PC-9 (cell line): ENCODE measurements at regions of chr2 and their contacts with region 1.

Region 1: DNA sequence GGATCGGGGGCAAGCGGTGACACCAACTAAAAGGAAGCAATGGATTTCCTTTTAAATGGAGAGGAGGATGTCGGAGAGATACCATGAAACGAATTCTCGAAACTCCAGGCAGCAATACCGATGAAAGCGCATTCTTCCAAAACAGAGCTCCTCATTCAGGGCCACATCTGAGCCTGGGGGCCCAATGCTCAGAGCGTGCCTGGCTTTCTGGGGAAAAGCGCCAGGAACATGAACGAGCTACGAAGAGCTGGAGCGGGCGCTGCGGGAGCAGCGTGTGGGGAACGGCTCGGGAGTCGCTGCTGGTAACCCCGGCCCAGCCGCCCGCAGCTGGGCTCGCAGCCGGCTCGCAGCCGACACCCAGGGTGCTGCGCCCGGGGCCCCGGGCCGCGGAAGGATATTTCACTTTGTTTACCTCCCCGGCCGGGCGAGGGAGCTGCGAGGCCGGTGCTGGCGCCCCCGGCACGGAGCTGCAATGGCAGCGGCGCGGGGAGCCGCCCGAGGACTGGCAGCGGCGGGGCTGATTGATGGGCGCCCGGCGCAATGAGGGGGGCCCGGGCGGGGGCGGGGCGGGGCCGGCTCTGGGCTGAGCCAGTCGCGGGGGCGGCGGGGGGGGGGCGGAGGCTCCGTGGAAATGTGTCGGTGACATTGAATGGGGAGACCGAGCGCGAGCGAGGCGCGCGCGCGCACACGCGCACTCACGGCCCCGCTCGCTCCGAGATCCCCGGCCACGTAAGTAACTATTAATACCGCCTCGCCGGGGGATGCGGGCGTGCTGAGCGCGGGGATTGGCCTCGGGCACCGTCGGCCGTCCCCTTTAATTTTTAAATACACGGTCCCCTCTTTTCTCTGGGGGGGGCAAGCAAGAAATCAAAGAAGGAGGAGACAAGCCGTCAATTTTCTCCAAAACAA is at the start of gene TRIB2:
- DNase-seq: peak; percentile 66 to 77
- H3K4me3 ChIP-seq: peak within 1 kb of the TSS; percentile 96
- H3K27ac ChIP-seq: peak within 1 kb of the TSS; percentile 94
- H3K4me1 ChIP-seq: peaks cover 35% of the 10 kb centered on the region
- H3K27me3 ChIP-seq: no peaks in the 10 kb centered on the region
- CTCF ChIP-seq: peak; percentile 8; the same call in 1 of the 2 replicates
- total RNA-seq, gene TRIB2: 18.9 and 20.2 TPM in 2 replicates

Region 2: DNA sequence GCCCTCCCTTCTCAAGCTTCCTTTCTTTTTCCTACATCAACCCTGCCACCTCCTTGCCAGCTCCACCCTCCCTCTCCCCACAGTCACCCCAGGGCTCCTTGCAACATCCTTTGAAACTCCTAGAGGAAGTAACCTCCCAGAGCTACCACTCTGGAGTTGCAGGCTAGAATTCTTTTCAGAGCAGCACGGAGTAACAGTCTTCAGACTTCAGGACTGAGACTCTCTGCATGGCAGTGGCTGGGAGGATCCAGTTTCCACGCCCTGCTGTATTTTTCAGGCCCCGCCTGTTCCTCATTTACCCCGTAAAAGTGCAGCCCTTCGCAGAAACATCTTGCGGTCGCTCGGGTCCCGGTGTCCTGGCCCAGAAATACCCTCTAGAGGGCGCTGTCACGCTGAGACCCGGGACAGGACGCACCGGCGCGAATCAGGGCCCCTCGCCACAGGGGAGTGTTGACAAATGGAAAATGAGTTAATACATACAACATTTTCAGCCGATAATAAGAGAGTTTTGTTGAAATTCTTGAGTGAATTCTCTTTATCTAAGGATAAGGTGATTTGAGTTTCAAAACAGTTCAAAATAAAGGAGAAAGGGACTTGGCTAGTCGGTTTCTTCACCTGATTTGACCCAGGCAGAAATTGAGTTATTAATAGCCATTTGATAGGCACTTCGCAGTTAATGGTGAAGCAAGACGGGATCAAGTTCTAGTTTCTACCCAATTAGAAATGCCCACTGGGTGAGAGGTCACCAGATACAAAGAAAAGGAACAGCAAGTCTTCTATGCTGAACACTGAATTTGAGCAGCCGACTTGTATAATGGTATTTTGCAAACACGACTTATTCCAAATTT is 1028.1 kb before region 1 on chr2:
- CTCF ChIA-PET with region 1: no interaction called
- POLR2A ChIA-PET with region 1: no interaction called
- intact Hi-C with region 1: loop called (anchors 10 kb)
- DNase-seq: peak; percentile 78 to 90
- H3K4me3 ChIP-seq: peak overlapping the region; percentile 53
- H3K27ac ChIP-seq: peak overlapping the region; percentile 82
- H3K4me1 ChIP-seq: peaks cover 42% of the 10 kb centered on the region
- H3K27me3 ChIP-seq: no peaks in the 10 kb centered on the region
- CTCF ChIP-seq: peak; percentile 99

Region 3: DNA sequence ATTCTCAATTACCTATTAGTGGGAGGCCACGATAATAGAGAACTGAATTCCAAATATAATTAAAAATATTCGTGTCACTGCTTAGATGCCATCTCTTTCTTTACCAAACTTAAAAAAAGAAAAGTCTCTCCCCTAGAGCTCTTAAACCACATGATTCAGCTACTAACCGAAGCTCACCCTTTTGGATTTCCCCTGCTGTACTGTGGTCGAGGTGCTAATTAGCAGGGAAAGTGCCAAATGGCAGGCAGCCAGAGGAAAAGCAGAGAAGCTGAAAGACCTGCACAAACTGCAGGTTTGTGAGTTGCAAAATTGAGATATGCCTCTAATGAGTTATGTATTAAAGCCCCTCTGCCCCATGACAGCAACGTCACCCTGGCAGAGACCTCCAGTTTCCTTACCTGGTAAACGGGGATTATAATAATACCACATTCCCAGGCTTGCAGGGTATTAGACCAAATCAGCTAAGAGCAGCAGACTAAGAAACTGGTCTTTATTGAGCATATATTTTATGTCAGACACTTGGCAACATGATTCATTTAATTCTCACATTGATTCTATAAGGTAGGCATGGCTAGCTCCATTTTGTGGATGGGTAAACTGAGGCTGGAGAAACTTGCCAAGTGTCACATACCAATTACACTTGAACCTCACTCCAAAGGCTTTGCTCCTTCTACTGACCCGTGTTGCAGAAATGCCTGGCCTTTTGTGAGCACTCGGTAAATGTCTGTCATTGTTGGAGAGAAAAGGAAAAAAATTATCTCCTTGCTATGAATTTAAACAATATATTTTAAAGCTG is 710.5 kb before region 1 on chr2:
- CTCF ChIA-PET with region 1: no interaction called
- POLR2A ChIA-PET with region 1: no interaction called
- intact Hi-C with region 1: loop called (anchors 5 kb)
- DNase-seq: peak; percentile 55 to 60
- H3K4me3 ChIP-seq: no peak overlapping the region
- H3K27ac ChIP-seq: no peak overlapping the region
- H3K4me1 ChIP-seq: peaks cover 40% of the 10 kb centered on the region
- H3K27me3 ChIP-seq: no peaks in the 10 kb centered on the region
- CTCF ChIP-seq: no peak

Region 4: GRCh38 chr2:12176623-12177454 is 539.7 kb before region 1 on chr2:
- CTCF ChIA-PET with region 1: no interaction called
- POLR2A ChIA-PET with region 1: interaction called, 4 read pairs
- intact Hi-C with region 1: loop called (anchors 1 kb)
- DNase-seq: peak; percentile 78 to 95
- H3K4me3 ChIP-seq: no peak overlapping the region
- H3K27ac ChIP-seq: peak overlapping the region; percentile 50
- H3K4me1 ChIP-seq: peaks cover 30% of the 10 kb centered on the region
- H3K27me3 ChIP-seq: no peaks in the 10 kb centered on the region
- CTCF ChIP-seq: no peak

Region 5: GRCh38 chr2:12317814-12318426 is 398.6 kb before region 1 on chr2:
- CTCF ChIA-PET with region 1: interaction called, 4 read pairs
- POLR2A ChIA-PET with region 1: no interaction called
- intact Hi-C with region 1: loop called (anchors 2 kb)
- DNase-seq: peak; percentile 12 to 86
- H3K4me3 ChIP-seq: no peak overlapping the region; the same call in 1 of the 2 replicates
- H3K27ac ChIP-seq: peak overlapping the region; percentile 92
- H3K4me1 ChIP-seq: peaks cover 44% of the 10 kb centered on the region
- H3K27me3 ChIP-seq: no peaks in the 10 kb centered on the region
- CTCF ChIP-seq: no peak

Region 6: DNA sequence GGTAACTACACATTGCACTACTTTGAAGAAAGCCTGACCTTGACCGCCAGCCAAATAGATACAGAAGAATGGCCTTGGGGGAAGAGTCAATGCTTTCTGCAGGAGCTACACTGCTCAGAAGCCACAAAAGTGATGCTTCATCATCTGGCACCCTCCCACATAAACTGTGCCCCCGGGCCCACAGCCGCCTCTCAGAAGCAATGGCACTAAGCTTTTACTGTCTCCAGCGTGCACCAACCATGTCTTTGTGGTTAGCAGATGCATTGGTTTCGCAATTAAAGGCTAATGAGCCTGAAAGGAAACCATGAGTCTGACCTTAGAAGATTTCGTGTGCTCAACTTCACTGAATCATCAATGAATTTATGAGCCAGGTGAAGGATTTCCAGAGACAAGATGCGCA is 209.2 kb before region 1 on chr2:
- CTCF ChIA-PET with region 1: no interaction called
- POLR2A ChIA-PET with region 1: interaction called, 3 read pairs
- intact Hi-C with region 1: loop called (anchors 5 kb)
- DNase-seq: peak; percentile 78 to 98
- H3K4me3 ChIP-seq: no peak overlapping the region
- H3K27ac ChIP-seq: no peak overlapping the region
- H3K4me1 ChIP-seq: peaks cover 38% of the 10 kb centered on the region
- H3K27me3 ChIP-seq: no peaks in the 10 kb centered on the region
- CTCF ChIP-seq: no peak

Region 7: DNA sequence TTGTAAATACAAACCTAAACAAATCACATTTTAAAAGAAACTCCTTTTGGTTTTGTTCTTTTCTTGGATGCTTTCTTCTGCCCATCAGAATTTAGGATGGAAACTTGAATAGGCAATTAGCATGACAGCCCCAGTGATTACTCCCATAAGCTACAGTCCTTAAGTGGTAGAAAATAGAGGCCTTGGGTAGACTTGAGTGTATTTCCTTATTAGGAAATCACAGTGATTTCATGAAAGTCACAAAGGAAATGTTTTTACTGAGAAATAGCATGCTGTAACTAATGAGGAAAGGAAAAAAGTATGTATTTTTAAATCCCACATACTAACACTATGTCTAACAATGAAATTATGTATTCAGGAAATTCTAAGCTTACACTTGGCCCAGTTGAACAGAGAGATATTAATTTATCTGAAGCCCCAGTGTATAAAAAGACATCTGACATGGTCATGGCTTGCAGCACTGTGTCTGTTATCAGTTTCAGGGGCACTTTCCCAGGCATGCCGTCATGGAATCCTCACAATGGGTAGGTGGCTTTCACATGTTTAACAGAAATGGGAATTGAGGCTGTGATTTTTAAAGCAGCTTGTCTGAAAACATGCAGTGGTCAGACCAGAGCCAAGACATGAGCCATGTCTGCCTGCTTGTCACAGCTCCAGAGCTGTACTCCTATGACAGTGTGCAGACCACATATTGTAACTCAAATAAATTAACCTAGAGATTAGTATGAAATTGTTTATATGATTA is 79.5 kb before region 1 on chr2:
- CTCF ChIA-PET with region 1: no interaction called
- POLR2A ChIA-PET with region 1: no interaction called
- intact Hi-C with region 1: no loop called
- DNase-seq: no peak
- H3K4me3 ChIP-seq: no peak overlapping the region
- H3K27ac ChIP-seq: no peak overlapping the region
- H3K4me1 ChIP-seq: no peaks in the 10 kb centered on the region; the same call in 1 of the 2 replicates
- H3K27me3 ChIP-seq: no peaks in the 10 kb centered on the region
- CTCF ChIP-seq: no peak

Region 8: GRCh38 chr2:12754643-12755042 is 38.1 kb after region 1 on chr2:
- CTCF ChIA-PET with region 1: no interaction called
- POLR2A ChIA-PET with region 1: no interaction called
- intact Hi-C with region 1: no loop called
- DNase-seq: no peak
- H3K4me3 ChIP-seq: no peak overlapping the region
- H3K27ac ChIP-seq: no peak overlapping the region
- H3K4me1 ChIP-seq: peaks cover 15% of the 10 kb centered on the region
- H3K27me3 ChIP-seq: no peaks in the 10 kb centered on the region
- CTCF ChIP-seq: no peak

Region 9: GRCh38 chr2:12819103-12819475 is 102.6 kb after region 1 on chr2:
- CTCF ChIA-PET with region 1: no interaction called
- POLR2A ChIA-PET with region 1: no interaction called
- intact Hi-C with region 1: no loop called
- DNase-seq: peak; percentile 31 to 89
- H3K4me3 ChIP-seq: no peak overlapping the region
- H3K27ac ChIP-seq: peak overlapping the region; percentile 30; the same call in 1 of the 2 replicates
- H3K4me1 ChIP-seq: peaks cover 26% of the 10 kb centered on the region
- H3K27me3 ChIP-seq: no peaks in the 10 kb centered on the region
- CTCF ChIP-seq: no peak

Region 10: GRCh38 chr2:12884713-12885282 is 168.3 kb after region 1 on chr2:
- CTCF ChIA-PET with region 1: no interaction called
- POLR2A ChIA-PET with region 1: no interaction called
- intact Hi-C with region 1: loop called (anchors 2 kb)
- DNase-seq: peak; percentile 72 to 99
- H3K4me3 ChIP-seq: no peak overlapping the region; the same call in 1 of the 2 replicates
- H3K27ac ChIP-seq: peak overlapping the region; percentile 91
- H3K4me1 ChIP-seq: peaks cover 37% of the 10 kb centered on the region
- H3K27me3 ChIP-seq: no peaks in the 10 kb centered on the region
- CTCF ChIP-seq: no peak